ENCODE measurements at regions of chr3 and their contacts with region 1.

Region 1: GRCh38 chr3:62462788-62463187 is 89.4 kb upstream of the FEZF2 start:
- DNase-seq: no peak
- H3K4me3 ChIP-seq: no peak overlapping the region
- H3K27ac ChIP-seq: no peak overlapping the region
- H3K27me3 ChIP-seq: no peaks in the 10 kb centered on the region
- CTCF ChIP-seq: no peak

Region 2: DNA sequence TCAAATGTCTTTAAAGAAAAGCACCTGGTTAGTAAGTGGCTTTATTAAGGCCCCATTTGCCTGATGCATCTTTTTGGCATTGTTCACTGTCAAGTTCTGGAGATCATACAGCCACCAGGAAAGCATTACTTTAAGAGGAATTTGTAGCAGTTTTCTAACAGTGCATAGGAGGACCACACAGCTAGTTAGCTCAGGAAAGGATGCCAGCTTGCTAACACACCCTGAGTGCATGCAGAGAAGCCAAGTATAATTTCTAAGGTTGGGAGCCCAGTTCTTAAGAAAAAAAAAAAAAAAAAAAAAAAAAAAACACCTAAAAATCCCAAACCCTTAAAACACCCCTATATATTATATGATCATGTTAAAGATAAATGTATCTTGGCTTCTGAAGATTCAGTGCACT is 12.5 kb after region 1 on chr3:
- CTCF ChIA-PET with region 1: no interaction called
- POLR2A ChIA-PET with region 1: interaction called, 11 read pairs
- DNase-seq: no peak
- H3K4me3 ChIP-seq: no peak overlapping the region
- H3K27ac ChIP-seq: no peak overlapping the region
- H3K27me3 ChIP-seq: no peaks in the 10 kb centered on the region
- CTCF ChIP-seq: no peak